Activated CD4-positive, alpha-beta memory T cell treated with anti-CD3 and anti-CD28 coated beads for 36 hours (primary cell): ENCODE measurements at regions of chr6 and their contacts with region 1.

Region 1: DNA sequence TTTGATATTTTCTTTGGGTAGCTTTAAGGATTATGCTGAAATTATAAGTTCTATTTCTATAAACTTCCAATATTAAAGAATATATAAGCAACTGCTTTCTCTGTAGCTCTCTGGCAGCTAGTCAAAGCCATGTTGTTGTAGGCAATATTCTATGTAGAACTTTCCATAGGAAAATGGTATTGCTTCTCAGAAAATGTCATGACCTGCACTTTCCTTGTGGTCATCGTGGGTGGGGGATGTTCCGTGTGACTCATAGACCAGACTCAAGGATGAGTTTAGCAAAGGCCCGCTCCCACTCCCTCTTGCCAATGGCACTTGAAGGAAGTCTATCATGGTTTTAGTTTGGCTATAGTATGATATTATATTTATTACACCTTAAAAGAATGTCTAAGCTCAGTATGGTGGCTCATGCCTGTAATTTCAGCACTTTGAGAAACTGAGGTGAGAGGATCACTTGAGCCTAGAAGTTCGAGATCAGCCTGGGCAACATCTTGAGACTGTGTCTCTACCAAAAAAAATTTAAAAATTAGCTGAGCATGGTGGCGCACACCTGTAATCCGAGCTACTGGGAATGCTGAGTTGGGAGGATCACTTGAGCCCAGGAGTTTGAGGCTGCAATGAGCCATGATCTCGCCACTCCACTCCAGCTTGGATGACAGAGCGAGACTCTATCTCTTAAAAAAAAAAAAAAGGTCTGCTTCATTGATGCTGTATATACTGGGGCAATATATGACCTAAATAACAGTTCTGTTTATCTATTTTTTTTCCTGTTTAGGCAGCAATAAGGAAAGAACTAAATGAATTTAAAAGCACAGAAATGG is 36.6 kb upstream of the LTV1 start:
- DNase-seq: peak; percentile 93
- H3K4me3 Mint-ChIP-seq: peak overlapping the region; percentile 23
- H3K27ac Mint-ChIP-seq: peak overlapping the region; percentile 80
- H3K4me1 Mint-ChIP-seq: peaks cover 49% of the 10 kb centered on the region
- H3K27me3 Mint-ChIP-seq: no peaks in the 10 kb centered on the region

Region 2: DNA sequence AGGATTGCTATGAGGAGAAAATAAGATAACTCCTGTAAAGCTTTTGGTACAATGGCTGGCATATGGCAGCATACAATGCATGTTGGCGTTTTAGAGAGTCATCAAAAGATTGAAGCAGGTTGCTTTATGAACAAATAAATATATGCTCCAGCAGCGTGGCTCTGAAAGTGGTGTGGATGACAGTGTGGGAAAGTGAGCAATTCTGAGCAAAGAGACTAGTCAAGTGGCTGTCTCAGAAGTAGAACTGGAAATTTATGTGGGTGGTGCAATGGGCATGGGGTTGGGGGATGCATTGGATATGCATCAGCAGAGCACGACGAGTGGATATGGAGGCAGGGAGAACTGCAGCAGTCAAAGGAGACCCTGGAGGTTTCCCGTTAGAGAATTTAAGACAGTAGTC is 194.9 kb before region 1 on chr6:
- CTCF ChIA-PET with region 1: no interaction called
- POLR2A ChIA-PET with region 1: no interaction called
- intact Hi-C with region 1: loop called (anchors 2 kb)
- DNase-seq: peak; percentile 42
- H3K4me3 Mint-ChIP-seq: no peak overlapping the region
- H3K27ac Mint-ChIP-seq: no peak overlapping the region
- H3K4me1 Mint-ChIP-seq: peaks cover 59% of the 10 kb centered on the region
- H3K27me3 Mint-ChIP-seq: no peaks in the 10 kb centered on the region

Region 3: DNA sequence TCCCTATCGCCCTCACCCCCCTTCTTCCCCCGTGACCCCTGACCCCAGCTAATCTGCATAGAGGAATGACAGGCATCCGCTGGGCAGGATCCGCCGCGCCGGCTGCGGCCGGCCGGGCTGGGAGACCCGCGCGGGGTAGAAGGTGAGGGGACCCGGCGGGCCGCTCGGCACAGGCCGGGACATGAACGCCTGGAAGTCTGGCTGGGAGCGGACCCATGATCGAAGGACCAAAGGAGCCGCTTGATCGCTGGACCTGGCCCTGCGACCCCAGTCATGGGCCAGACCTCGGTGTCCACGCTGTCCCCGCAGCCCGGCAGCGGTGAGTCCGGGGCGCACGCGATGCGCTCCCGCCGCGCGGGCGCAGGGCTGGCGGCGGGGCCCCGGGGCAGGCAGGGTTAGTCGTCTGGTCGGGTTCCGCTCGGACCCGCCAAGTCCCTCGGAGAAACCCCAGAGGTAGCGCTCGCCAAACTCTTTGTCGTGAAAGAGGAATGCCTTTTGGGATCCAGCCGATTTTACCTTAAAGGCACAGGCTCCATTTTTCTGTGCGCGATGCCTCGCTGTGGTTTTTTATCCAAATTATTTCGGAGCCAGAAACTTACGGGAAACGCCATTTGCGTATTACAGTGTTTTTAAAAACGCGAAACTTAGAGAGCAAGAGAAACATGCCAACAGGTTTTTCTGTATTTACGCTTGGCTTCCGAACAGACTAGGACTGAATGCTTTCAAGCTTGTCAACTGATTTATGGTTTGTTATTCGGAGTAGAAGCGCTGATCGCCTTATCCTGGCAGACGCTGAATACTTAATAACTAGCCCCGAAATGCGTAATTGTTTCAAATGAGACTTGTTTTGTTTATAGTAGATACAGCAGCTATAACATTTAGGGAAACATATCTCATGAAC is 128.4 kb before region 1 on chr6 and contains the start of gene PHACTR2:
- CTCF ChIA-PET with region 1: no interaction called
- POLR2A ChIA-PET with region 1: no interaction called
- intact Hi-C with region 1: loop called (anchors 5 kb)
- DNase-seq: peak; percentile 74
- H3K4me3 Mint-ChIP-seq: peak within 1 kb of the TSS; percentile 72
- H3K27ac Mint-ChIP-seq: no peak within 1 kb of the TSS
- H3K4me1 Mint-ChIP-seq: peaks cover 35% of the 10 kb centered on the region
- H3K27me3 Mint-ChIP-seq: no peaks in the 10 kb centered on the region
- total RNA-seq, gene PHACTR2: 26.1 to 28.1 TPM

Region 4: GRCh38 chr6:143842902-143843676 is 36.6 kb after region 1 on chr6 and contains the start of gene LTV1:
- CTCF ChIA-PET with region 1: no interaction called
- POLR2A ChIA-PET with region 1: interaction called, 15 read pairs
- intact Hi-C with region 1: loop called (anchors 1 kb)
- DNase-seq: peak; percentile 96
- H3K4me3 Mint-ChIP-seq: peak within 1 kb of the TSS; percentile 93
- H3K27ac Mint-ChIP-seq: peak within 1 kb of the TSS; percentile 93
- H3K4me1 Mint-ChIP-seq: peaks cover 25% of the 10 kb centered on the region
- H3K27me3 Mint-ChIP-seq: no peaks in the 10 kb centered on the region
- total RNA-seq, gene LTV1: 33.5 to 35.4 TPM